ENCODE measurements at regions of chr2 and their contacts with region 1.

Region 1: GRCh38 chr2:10408649-10409579 is 39.2 kb downstream of the ODC1 start:
- DNase-seq: peak; percentile 88
- H3K4me3 ChIP-seq: no peak overlapping the region
- H3K27ac ChIP-seq: peak overlapping the region; percentile 42 to 92 (median 84)
- H3K4me1 ChIP-seq: peaks cover 0 to 87% (median 61%) of the 10 kb centered on the region in 4 donors
- H3K27me3 ChIP-seq: no peaks in the 10 kb centered on the region
- CTCF ChIP-seq: peak; percentile 80 to 97 (median 90)
- EP300 ChIP-seq: no peak
- POLR2A ChIP-seq: no peak

Region 2: GRCh38 chr2:10122386-10123280 is 286.3 kb before region 1 on chr2 and contains the start of gene RRM2:
- intact Hi-C with region 1: loop called (anchors 2 kb)
- DNase-seq: peak; percentile 97
- H3K4me3 ChIP-seq: peak within 1 kb of the TSS; percentile 13 to 63 (median 54)
- H3K27ac ChIP-seq: no peak within 1 kb of the TSS
- H3K4me1 ChIP-seq: peaks cover 0 to 33% (median 25%) of the 10 kb centered on the region in 4 donors
- H3K27me3 ChIP-seq: peaks cover 13 to 20% (median 18%) of the 10 kb centered on the region in 3 donors
- CTCF ChIP-seq: no peak
- EP300 ChIP-seq: no peak
- POLR2A ChIP-seq: no peak
- total RNA-seq, gene RRM2: 0.16 to 4.3 (median 2.7) TPM in 3 of 4 donors, not detected in the other

Region 3: GRCh38 chr2:10269711-10270610 is 139.0 kb before region 1 on chr2:
- intact Hi-C with region 1: loop called (anchors 5 kb)
- DNase-seq: no peak
- H3K4me3 ChIP-seq: no peak overlapping the region
- H3K27ac ChIP-seq: no peak overlapping the region
- H3K4me1 ChIP-seq: peaks cover 0 to 8% (median 1%) of the 10 kb centered on the region in 4 donors
- H3K27me3 ChIP-seq: no peaks in the 10 kb centered on the region
- CTCF ChIP-seq: no peak
- EP300 ChIP-seq: no peak
- POLR2A ChIP-seq: no peak

Region 4: GRCh38 chr2:10285556-10286198 is 123.2 kb before region 1 on chr2:
- intact Hi-C with region 1: loop called (anchors 5 kb)
- DNase-seq: peak; percentile 92
- H3K4me3 ChIP-seq: no peak overlapping the region
- H3K27ac ChIP-seq: peak overlapping the region; percentile 55 to 75 (median 70)
- H3K4me1 ChIP-seq: peaks cover 0 to 37% (median 24%) of the 10 kb centered on the region in 4 donors
- H3K27me3 ChIP-seq: no peaks in the 10 kb centered on the region
- CTCF ChIP-seq: no peak
- EP300 ChIP-seq: no peak
- POLR2A ChIP-seq: no peak

Region 5: DNA sequence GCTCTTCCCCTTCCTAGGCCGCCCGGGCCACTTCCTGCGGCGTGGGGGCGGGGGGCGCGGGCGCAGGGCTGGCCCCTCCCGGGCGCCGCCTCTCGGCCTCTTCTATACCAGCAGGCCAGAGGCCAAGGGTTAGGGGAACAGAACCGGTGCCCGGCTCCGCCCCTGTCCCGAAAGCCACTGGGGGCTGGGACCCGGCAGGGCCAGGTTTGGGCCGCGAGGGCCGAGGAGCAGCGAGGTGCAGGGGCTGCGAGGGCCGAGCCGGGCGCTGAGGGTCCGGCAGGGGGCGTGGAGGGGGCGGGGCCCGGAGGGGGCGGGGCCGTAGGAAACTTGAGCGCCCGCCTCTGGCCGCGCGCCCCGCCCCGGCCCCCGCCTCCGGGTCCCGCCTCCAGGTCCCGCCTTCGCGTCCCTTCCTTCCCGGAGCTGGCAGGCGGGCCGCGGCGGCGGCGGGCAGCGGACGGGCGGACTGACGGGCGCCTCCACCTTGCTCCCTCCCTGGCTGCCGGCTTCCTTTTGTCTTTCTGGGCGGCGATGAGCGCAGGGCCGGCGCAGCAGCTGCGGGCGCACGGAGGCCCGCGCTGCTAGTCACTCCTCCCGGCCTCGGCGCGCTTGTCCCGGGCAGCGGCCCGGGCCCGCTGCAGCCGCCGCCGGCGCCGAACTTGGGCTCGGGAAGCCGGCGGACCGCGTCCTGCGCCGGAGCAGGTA is 106.3 kb before region 1 on chr2 and contains the start of gene HPCAL1:
- intact Hi-C with region 1: loop called (anchors 1 kb)
- DNase-seq: peak; percentile 93
- H3K4me3 ChIP-seq: peak within 1 kb of the TSS; percentile 56 to 91 (median 76)
- H3K27ac ChIP-seq: peak within 1 kb of the TSS; percentile 78 to 87 (median 84)
- H3K4me1 ChIP-seq: peaks cover 0 to 41% (median 27%) of the 10 kb centered on the region in 4 donors
- H3K27me3 ChIP-seq: no peaks in the 10 kb centered on the region
- CTCF ChIP-seq: peak in 3 of 4 experiments; percentile 8 to 59 (median 44)
- EP300 ChIP-seq: no peak
- POLR2A ChIP-seq: peak; percentile 34 to 58
- total RNA-seq, gene HPCAL1: 27.7 to 46.0 (median 34.2) TPM

Region 6: GRCh38 chr2:10448208-10448645 is 39.3 kb after region 1 on chr2 and contains the start of gene ODC1:
- intact Hi-C with region 1: loop called (anchors 5 kb)
- DNase-seq: peak; percentile 97
- H3K4me3 ChIP-seq: peak within 1 kb of the TSS; percentile 61 to 71 (median 68)
- H3K27ac ChIP-seq: peak within 1 kb of the TSS; percentile 90 to 97 (median 96)
- H3K4me1 ChIP-seq: peaks cover 0 to 54% (median 35%) of the 10 kb centered on the region in 4 donors
- H3K27me3 ChIP-seq: no peaks in the 10 kb centered on the region
- CTCF ChIP-seq: no peak
- EP300 ChIP-seq: peak in 1 of 4 donors; percentile 66
- POLR2A ChIP-seq: no peak
- total RNA-seq, gene ODC1: 44.6 to 84.4 (median 53.7) TPM